Left cardiac atrium (tissue), 4 donors: ENCODE measurements at regions of chr6 and their contacts with region 1.

Region 1: GRCh38 chr6:153947808-153948447 is 91.1 kb upstream of the OPRM1 start:
- DNase-seq: no peak
- ATAC-seq: peak; percentile 23 to 44

Region 2: GRCh38 chr6:153231048-153231646 is 716.8 kb before region 1 on chr6:
- intact Hi-C with region 1: loop called (anchors 5 to 10 kb)
- DNase-seq: peak; percentile 28
- ATAC-seq: peak; percentile 32 to 53